Activated CD4-positive, alpha-beta T cell treated with anti-CD3 and anti-CD28 coated beads, Interleukin-2, amount 10 ng/mL, durations not matched to agents 24 days and 14 days (primary cell): ENCODE measurements at regions of chr3 and their contacts with region 1.

Region 1: DNA sequence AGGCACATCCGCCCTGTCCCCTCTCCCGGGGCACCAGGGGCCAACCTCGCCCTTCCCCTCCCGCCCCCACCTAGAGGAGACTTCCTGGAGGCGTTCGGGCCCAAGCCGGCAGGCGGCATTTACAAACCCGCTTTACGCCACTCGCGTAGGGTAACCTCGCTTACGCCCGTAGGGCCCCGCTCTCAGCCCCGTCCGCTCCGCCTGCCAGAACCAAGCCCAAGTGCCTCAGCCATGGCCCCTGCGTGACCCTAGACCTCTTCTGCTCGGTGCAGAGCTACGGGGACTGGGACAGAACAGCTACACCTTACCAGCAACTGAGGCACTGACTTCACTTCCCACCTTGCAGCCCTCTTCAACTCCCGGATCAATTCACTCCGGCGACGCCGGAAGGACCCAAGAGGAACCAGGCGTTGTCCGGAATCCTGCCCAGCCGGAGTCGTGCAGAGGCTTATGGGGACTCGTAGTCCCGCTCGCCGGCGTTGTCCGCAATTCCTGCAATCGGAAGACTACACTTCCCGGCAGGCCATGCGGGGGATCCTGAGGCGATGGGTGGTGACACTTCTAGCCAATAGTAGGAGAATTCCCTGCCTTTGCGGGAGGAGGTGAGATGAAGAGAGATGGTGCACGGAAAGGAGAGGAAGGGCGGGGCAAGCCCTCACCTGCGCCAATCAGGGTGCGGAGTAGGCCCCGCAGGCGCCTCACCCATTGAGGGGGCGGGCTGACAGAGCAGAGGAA is at the start of gene PDCD10:
- DNase-seq: peak; percentile 99
- H3K4me3 Mint-ChIP-seq: no peak within 1 kb of the TSS
- H3K27ac Mint-ChIP-seq: no peak within 1 kb of the TSS
- H3K4me1 Mint-ChIP-seq: peaks cover 28% of the 10 kb centered on the region
- H3K27me3 Mint-ChIP-seq: peaks cover 7% of the 10 kb centered on the region
- total RNA-seq, gene PDCD10: 73.9 and 76.1 TPM in 2 replicates

Region 2: DNA sequence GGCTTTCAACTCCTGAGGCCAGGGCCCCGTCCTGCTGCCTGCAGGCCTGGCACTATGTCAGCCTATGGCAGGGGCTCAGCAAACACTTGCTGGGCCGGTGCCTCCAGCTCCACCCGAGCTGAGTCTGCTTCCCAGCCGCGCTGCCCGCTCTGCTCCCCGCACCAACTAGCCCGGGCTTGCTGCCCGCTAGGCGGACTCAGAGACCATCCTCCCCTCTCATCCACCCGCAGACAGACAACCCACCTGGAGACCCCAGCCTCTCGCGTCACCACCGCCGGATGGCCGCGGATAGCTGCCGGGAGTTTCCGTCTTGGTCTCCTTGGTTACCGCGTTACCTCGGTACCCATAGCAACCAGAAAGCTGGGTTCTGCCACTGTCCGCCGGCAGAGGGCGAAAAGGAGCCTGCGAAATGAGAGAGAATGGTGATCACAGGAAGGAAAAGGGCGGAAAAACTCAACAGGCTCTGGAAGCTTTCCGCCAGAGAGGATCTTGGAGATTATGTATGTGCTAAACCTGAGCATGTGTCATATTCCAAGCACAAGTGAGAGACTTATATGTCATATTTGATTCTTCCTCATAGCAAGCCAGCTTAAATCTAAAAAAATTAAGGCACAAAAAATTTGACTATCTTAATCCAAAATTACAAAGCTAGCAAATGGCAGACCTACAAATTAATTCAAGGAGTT is 354.5 kb before region 1 on chr3 and contains the start of gene ZBBX:
- intact Hi-C with region 1: loop called (anchors 1 kb)
- DNase-seq: peak; percentile 96
- H3K4me3 Mint-ChIP-seq: peak within 1 kb of the TSS; percentile 85
- H3K27ac Mint-ChIP-seq: peak within 1 kb of the TSS; percentile 49
- H3K4me1 Mint-ChIP-seq: peaks cover 4% of the 10 kb centered on the region
- H3K27me3 Mint-ChIP-seq: peaks cover 14% of the 10 kb centered on the region
- total RNA-seq, gene ZBBX: not detected in 2 replicates

Region 3: GRCh38 chr3:167691366-167691765 is 43.3 kb before region 1 on chr3:
- intact Hi-C with region 1: loop called (anchors 1 kb)
- DNase-seq: peak; percentile 72
- H3K4me3 Mint-ChIP-seq: no peak overlapping the region
- H3K27ac Mint-ChIP-seq: peak overlapping the region; percentile 26
- H3K4me1 Mint-ChIP-seq: peaks cover 20% of the 10 kb centered on the region
- H3K27me3 Mint-ChIP-seq: no peaks in the 10 kb centered on the region

Region 4: DNA sequence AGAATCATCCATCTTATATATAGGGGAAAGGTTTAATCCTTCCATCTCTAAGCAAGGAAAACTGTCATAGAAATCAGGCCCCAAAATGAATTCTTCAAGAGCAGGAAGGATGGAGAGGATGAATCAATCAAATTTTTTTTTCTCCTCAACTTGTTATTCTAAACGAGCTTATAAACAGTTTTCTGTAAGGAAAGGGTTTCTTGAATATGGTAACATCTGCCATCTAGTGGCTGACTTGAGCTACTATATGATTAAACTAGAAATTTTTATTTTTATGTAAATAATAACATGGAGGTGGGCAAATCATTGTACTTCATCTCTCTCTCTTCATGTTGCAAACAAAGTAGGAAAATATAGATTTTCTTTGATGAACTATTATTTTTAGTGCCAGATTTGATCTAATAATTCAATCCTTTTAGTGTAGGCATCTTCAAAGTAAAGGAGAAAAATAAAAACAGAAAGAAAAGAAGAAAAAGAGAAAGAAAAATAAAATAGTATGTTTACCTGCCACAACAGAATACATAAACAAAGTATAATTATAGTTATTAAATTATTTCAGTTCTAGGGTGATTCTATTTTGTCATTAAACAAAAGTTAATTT is 147.5 kb after region 1 on chr3:
- intact Hi-C with region 1: loop called (anchors 5 kb)
- DNase-seq: no peak
- H3K4me3 Mint-ChIP-seq: no peak overlapping the region
- H3K27ac Mint-ChIP-seq: no peak overlapping the region
- H3K4me1 Mint-ChIP-seq: no peaks in the 10 kb centered on the region
- H3K27me3 Mint-ChIP-seq: peaks cover 9% of the 10 kb centered on the region

Region 5: GRCh38 chr3:168024537-168024941 is 289.9 kb after region 1 on chr3:
- intact Hi-C with region 1: loop called (anchors 5 kb)
- DNase-seq: peak; percentile 75
- H3K4me3 Mint-ChIP-seq: peak overlapping the region; percentile 60
- H3K27ac Mint-ChIP-seq: peak overlapping the region; percentile 83
- H3K4me1 Mint-ChIP-seq: peaks cover 47% of the 10 kb centered on the region
- H3K27me3 Mint-ChIP-seq: no peaks in the 10 kb centered on the region

Region 6: DNA sequence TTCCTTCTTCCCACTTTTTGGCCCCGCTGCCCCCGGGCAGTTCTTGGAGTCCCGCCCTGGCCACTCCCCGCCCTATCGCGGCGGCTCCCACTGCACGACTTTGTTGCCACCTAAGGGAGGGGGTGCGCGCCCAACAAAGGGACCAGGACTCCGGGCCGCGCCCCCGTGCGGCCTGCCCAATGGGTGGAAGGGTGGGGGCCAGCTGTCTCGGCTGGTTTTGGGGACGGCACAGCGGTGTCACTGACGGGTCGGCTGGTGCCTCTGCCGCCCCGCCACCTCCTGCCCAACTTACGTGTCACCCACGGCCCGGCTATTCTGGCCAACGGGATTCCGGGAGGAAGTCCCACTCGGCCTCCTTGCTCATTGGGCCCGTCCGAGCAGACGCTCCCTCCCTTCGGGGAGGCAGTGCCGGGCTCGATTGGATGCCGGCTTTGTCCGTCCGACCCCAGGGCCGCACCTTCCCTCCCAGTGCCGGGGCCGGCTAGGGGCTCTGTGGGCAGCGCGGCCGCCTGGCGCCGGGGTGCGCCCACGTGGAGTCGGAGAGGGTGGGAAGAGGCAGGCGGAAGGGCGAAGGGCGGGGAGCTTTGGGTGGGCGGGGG is 361.0 kb after region 1 on chr3 and contains the start of gene GOLIM4:
- intact Hi-C with region 1: loop called (anchors 2 kb)
- DNase-seq: peak; percentile 86
- H3K4me3 Mint-ChIP-seq: peak within 1 kb of the TSS; percentile 83
- H3K27ac Mint-ChIP-seq: peak within 1 kb of the TSS; percentile 86
- H3K4me1 Mint-ChIP-seq: peaks cover 10% of the 10 kb centered on the region
- H3K27me3 Mint-ChIP-seq: peaks cover 36% of the 10 kb centered on the region
- total RNA-seq, gene GOLIM4: 8.5 and 8.6 TPM in 2 replicates

Region 7: DNA sequence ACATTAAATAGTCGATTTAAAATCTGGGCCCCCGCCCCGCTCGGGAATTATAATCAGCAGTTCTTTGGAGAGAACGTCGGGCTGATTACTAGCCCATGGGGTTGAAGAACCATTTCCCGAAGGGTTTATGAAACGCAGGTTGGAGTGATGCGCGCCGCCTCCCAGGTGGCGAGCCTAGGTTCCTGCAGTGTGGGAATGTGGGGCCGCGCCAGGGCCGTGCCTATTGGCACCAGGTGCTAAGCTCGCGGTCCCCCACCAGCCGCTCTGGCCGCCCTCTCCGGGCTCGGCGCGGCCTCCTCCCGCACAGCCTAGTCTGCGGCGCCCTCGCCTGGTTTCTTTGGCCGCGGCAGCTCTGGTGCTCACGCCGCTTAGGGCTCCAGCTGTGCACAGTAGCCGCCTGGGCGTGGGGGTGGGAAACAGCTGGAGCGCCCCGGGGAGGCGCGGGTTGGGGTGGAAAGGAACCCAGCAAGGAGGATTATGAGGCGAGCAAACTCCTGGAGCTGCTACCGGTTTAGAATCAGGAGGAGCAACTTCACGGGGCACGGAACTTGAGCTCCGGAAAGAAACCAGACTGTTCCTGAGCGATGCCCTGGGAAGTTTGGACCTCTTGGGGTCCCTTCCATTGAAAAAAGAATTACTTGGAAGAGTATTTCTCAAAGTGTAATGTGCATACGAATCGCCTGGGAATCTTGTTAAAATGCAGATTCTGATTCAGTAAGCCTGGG is 1934.5 kb after region 1 on chr3:
- intact Hi-C with region 1: loop called (anchors 10 kb)
- DNase-seq: peak; percentile 84
- H3K4me3 Mint-ChIP-seq: peak overlapping the region; percentile 61
- H3K27ac Mint-ChIP-seq: peak overlapping the region; percentile 27
- H3K4me1 Mint-ChIP-seq: peaks cover 16% of the 10 kb centered on the region
- H3K27me3 Mint-ChIP-seq: peaks cover 88% of the 10 kb centered on the region